ENCODE measurements at regions of chr20 and their contacts with region 1.

Region 1: GRCh38 chr20:41173161-41173721 is 35.9 kb downstream of the PLCG1 start:
- DNase-seq: peak; percentile 86 to 93 (median 92)
- H3K4me3 ChIP-seq: no peak overlapping the region
- H3K27ac ChIP-seq: peak overlapping the region; percentile 51 to 96 (median 91)
- H3K27me3 ChIP-seq: no peaks in the 10 kb centered on the region
- CTCF ChIP-seq: peak; percentile 92 to 100 (median 98)

Region 2: DNA sequence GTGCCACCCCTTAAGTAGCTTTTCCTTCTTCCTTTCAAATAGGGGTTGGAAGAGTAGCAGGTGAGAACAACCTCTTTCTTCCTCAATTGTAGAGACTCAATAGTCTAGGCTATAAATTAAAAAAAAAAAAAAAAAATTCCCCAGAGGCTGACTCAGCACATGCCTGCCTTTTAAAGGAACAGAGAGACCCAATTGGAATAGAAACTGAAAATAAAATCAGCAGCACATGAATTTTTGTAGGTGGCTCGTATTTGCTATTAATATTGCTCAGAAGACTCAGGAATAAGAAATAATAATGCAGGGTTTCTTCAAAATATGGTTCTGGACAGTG is 125.3 kb before region 1 on chr20:
- intact Hi-C with region 1: no loop called
- DNase-seq: no peak
- H3K4me3 ChIP-seq: peak overlapping the region in 20 of 59 donors; percentile 1 to 41 (median 18)
- H3K27ac ChIP-seq: peak overlapping the region in 5 of 59 donors; percentile 3 to 44 (median 10)
- H3K27me3 ChIP-seq: no peaks in the 10 kb centered on the region
- CTCF ChIP-seq: no peak

Region 3: GRCh38 chr20:41136680-41137613 is 36.3 kb before region 1 on chr20 and contains the start of gene PLCG1:
- intact Hi-C with region 1: loop called (anchors 5 kb)
- DNase-seq: peak; percentile 88 to 95 (median 93)
- H3K4me3 ChIP-seq: peak within 1 kb of the TSS; percentile 65 to 99 (median 89)
- H3K27ac ChIP-seq: peak within 1 kb of the TSS; percentile 66 to 99 (median 96)
- H3K27me3 ChIP-seq: no peaks in the 10 kb centered on the region
- CTCF ChIP-seq: peak in 16 of 56 donors; percentile 8 to 38 (median 20)
- total RNA-seq, gene PLCG1: 110 to 346 (median 179) TPM

Region 4: GRCh38 chr20:41232973-41233926 is 60.0 kb after region 1 on chr20:
- intact Hi-C with region 1: loop called (anchors 2 kb)
- DNase-seq: no peak
- H3K4me3 ChIP-seq: peak overlapping the region in 8 of 59 donors; percentile 5 to 39 (median 17)
- H3K27ac ChIP-seq: peak overlapping the region; percentile 73 to 97 (median 94)
- H3K27me3 ChIP-seq: no peaks in the 10 kb centered on the region
- CTCF ChIP-seq: no peak

Region 5: DNA sequence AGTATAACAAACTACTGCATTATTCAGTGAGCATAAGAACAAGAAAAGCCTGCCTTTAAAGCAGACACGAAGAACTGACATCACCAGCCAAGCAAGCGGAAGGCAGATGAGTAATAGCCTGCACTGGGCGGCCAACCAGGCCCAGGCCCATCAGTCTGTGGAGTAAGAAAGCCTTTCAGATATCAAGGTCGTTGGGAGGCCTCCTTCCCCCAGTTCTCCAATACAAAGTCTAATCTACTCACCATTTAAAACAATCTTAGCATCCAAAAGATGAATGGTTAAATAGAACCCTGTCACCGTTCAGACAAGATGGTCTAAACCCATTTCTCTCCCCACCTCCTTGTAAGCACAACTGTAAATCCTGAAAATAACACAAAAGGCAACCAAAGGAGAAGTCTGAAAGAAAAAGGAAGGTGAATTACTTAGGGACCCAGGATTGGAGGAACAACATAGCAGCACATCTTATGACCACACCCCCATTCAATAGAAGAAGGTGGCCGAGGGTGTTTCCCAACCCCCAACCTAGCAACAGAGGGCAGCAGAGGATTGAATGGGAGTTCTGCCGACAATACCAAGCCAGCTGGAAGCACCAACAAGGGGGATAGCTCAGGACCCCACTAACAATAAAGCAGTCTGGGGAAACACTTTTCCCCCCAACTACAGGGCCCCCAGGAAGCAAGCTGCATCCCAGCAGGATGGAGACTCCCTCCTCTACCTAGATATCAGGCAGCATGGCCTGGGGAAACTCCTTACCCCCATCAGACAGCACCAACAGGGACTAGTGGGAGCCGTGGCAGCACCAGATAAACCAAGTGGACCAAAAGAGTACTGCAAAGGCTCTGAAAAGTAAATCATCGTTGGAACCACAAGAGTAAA is 76.4 kb after region 1 on chr20:
- intact Hi-C with region 1: loop called in 1 of 2 experiments (anchors 5 kb)
- DNase-seq: peak in 9 of 10 donors; percentile 53 to 86 (median 72)
- H3K4me3 ChIP-seq: peak overlapping the region in 4 of 59 donors; percentile 8 to 14 (median 13)
- H3K27ac ChIP-seq: peak overlapping the region; percentile 80 to 99 (median 95)
- H3K27me3 ChIP-seq: no peaks in the 10 kb centered on the region
- CTCF ChIP-seq: peak in 51 of 56 donors; percentile 23 to 74 (median 50)

Region 6: DNA sequence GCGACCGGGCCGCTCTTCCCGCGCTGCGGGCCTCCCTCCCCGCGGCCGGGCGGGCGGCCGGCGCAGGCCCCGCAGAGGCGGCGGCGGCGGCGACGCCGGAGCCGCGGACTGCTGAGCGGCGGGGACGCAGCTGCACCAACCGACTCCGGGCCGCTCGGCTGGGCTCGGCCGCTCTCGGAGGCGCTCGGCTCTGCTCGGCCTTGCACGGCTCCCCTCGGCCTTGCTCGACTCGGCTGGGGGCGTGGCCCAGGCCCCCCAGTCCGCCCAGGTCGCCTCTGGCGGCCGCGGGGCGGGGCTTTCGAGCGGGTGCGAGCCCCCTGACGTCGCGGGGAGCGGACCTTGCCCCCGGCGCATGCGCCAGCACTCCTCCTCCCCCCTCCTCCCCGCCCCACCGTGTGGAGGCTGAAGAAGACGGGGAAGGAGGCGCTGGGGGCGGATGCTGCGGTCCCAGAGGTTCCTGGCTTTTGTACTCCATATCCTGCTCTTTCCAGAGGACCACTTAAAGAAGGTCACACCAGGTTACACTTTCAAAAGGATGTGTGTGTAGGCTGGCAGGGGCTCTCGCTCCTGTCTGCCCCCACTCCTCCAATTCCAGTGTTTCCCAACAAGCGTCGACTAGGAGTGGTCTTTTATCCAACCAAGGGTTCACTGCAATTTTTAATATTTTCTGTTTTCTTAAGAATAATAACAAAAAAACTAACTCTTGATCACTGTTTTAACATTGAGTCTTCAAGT is 144.5 kb after region 1 on chr20 and contains the start of gene ZHX3:
- intact Hi-C with region 1: loop called (anchors 2 to 5 kb)
- DNase-seq: peak; percentile 88 to 98 (median 94)
- H3K4me3 ChIP-seq: peak within 1 kb of the TSS; percentile 61 to 96 (median 84)
- H3K27ac ChIP-seq: peak within 1 kb of the TSS; percentile 66 to 97 (median 92)
- H3K27me3 ChIP-seq: no peaks in the 10 kb centered on the region
- CTCF ChIP-seq: peak in 30 of 56 donors; percentile 5 to 43 (median 23)
- total RNA-seq, gene ZHX3: 73.6 to 239 (median 112) TPM

Region 7: DNA sequence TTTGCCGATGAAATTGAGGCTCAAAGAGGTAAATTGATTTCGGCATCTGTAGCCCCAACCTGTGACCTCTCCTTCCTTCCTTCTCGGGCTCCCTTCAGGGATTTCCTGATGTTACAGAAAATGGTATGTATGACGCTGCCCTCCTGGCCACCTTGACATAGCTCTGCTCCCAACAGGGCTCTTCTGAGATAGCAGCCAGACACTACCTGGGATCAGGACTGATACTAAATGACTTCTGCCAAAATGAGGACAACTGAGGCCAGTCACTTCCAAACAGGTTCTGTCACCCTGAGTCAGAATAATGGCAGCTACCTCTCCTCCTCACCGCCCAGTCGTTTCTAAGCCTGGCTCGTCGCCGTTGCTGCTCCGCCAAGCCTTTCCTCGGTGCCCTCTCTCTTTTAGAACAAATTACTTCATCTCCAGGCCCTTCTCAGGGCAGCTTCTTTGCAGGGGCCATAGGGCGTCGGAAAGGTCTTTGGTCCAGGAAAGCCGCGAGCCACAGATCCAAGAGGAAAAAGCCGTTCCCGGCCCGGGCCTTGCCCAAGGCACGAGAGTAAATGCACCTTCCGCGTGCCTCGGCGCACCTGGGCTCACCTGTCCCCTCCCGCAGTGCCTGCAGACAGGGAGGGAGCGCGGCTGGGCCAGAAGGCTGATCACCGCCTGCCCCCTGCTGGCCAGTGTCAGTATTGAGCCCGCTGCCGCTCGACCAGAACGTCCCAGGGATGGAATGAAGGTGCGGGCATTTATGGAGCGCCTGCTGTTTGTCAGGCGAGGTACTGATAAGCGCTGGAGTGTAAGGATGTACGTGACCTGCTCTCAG is 166.5 kb after region 1 on chr20:
- intact Hi-C with region 1: loop called (anchors 1 kb)
- DNase-seq: peak in 9 of 10 donors; percentile 77 to 88 (median 82)
- H3K4me3 ChIP-seq: peak overlapping the region; percentile 12 to 65 (median 46)
- H3K27ac ChIP-seq: peak overlapping the region in 29 of 59 donors; percentile 0 to 73 (median 45)
- H3K27me3 ChIP-seq: no peaks in the 10 kb centered on the region
- CTCF ChIP-seq: peak; percentile 96 to 100 (median 99)

Region 8: GRCh38 chr20:41411391-41411847 is 238.2 kb after region 1 on chr20:
- intact Hi-C with region 1: loop called (anchors 5 to 10 kb)
- DNase-seq: no peak
- H3K4me3 ChIP-seq: no peak overlapping the region
- H3K27ac ChIP-seq: peak overlapping the region in 12 of 59 donors; percentile 1 to 60 (median 24)
- H3K27me3 ChIP-seq: no peaks in the 10 kb centered on the region
- CTCF ChIP-seq: peak; percentile 42 to 75 (median 61)

Region 9: DNA sequence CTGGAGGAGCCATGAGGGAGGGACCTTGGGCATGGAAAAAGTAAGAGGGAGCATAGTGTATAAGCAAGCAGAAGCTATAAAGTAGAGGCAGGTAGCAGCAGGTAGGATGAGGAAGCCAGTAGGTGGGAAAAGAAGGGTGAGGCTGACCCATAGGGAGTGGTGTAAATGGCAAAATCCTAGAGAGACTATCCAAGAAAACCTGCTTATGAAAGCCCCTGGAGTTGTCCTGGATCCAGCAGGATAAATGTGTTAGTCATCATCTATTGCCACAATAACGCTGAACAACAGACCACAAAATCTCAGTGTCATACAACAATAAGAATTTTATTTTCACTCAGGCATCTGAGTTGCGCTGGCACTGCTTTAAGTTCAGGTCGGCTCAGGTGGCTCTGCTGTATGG is 414.7 kb after region 1 on chr20:
- intact Hi-C with region 1: no loop called
- DNase-seq: no peak
- H3K4me3 ChIP-seq: no peak overlapping the region
- H3K27ac ChIP-seq: no peak overlapping the region
- H3K27me3 ChIP-seq: no peaks in the 10 kb centered on the region
- CTCF ChIP-seq: no peak

Measured in dorsolateral prefrontal cortex (tissue), 120 donors.